ENCODE measurements at regions of chr17 and their contacts with region 1.

Region 1: DNA sequence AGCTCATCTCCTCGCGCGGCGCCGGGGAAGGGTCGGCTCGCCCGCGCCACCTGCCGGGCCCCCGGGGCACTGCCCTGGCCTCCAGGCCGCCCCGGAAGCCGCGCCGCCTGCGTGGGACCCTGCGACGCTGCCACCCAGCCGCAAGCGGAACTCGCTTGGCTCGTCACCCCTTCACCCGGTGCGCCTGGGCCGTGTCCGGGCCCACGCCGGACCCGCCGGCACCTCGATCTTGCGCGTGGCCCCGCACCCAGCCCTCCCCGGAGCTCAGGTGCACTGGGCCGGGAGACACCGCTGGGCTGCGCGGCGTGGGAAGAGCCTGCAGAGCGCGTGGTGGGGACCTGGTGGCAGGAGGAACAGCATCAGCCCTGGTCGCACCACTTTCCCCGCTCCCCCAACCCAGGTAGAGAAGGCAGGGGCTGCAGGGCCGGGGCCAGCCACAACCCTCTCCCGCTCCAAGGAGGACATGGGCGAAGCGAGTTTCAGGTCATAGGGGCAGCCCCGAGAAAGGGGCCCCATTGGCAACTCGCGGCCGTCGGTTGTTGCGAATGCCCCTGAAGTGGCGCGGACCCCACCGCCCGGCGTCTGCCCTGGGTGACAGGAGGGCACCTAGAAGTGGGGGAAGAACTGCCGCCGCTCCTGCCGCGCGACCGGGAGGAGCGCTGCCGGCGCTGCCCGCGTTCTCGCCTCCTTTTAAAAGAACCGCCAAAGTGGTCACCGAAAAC is 363 bp upstream of the MIF4GD start:
- DNase-seq: peak; percentile 96
- CTCF ChIP-seq: peak; percentile 96

Region 2: DNA sequence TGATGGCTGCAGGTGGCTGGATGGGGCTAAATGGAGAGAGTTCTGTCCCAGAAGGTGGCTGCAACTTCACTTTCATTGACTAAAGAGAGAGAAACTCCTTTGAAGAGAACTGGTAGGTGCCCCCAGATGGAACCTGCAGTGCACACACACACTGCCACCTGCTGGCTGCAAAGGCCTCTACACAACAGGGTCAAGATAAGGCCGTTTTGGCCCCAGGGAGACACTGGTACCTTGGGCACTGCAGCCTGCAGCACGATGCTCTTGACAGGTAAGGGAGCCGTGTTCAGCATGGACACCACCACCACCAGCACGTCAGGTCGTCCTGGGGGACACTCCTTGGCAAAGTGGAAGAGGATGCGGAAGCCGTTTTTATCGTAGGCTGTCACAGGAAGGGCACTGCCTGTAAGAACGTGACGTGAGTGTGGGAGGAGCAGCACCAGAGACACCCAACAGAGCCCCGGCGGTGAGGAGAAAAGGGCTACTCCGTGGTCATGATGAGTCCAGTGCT is 32.7 kb before region 1 on chr17:
- CTCF ChIA-PET with region 1: interaction called, 15 read pairs
- POLR2A ChIA-PET with region 1: no interaction called
- DNase-seq: peak; percentile 82
- CTCF ChIP-seq: peak; percentile 84

Region 3: GRCh38 chr17:75289115-75289831 is 17.9 kb after region 1 on chr17 and contains the start of gene SLC25A19:
- CTCF ChIA-PET with region 1: interaction called, 108 read pairs
- POLR2A ChIA-PET with region 1: interaction called, 19 read pairs
- DNase-seq: peak; percentile 97
- CTCF ChIP-seq: peak; percentile 49

Region 4: DNA sequence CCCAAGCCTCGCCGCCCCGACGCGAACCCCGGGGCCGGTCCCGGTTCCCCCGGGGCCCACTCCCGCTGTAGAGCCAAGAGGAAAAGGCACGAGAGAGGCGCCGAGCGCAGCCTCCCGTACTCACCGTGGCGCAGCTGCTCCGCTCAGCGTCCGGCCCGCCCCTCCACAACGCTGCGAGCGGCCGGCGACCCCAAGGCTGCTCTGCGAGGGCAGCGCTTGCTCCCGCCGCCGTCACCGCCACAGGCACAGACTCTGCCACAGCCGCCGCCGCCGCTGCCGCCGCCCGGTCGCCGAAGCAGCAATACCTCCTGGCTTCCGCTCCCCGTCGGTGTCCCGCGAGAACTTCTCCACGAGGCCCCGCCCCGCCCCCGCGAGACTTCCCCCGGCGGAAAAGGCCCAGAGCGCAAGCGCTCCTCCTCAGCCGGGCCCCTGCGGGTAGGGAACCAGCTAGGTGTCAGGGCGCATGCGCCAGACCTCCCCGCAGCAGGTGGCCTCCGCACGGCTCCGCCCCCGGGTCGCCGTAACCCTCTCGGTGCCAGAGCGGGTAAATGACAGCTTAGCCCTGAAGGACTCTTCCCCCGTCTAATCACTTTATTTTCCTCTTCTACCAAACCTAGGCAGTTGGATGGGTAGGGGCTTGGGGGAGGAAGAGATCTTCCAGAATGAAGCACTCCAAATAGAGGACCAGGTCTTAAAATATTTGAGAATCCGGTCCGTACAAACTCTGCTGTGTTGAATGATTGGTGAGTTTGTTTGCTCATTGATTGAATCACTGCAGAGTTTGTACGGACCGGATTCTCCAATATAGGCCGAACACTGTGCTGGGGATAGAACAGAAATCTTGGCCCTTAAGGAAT is 134.2 kb after region 1 on chr17 and contains the start of gene GRB2:
- CTCF ChIA-PET with region 1: interaction called, 17 read pairs
- POLR2A ChIA-PET with region 1: no interaction called
- DNase-seq: peak; percentile 99
- CTCF ChIP-seq: no peak

Measured in GM10248 (cell line).